ENCODE measurements at regions of chr22 and their contacts with region 1.

Region 1: GRCh38 chr22:40044102-40044869 is 49.5 kb downstream of the FAM83F start:
- DNase-seq: peak; percentile 91 to 100 (median 99)
- ATAC-seq: peak; percentile 86 to 87
- H3K4me3 Mint-ChIP-seq: peak overlapping the region; percentile 93 to 100 (median 96)
- H3K27ac Mint-ChIP-seq: peak overlapping the region; percentile 97 to 100 (median 100)
- H3K4me1 Mint-ChIP-seq: peaks cover 19 to 49% (median 43%) of the 10 kb centered on the region in 4 donors
- H3K27me3 Mint-ChIP-seq: peaks cover 6 to 8% (median 7%) of the 10 kb centered on the region in 5 donors

Region 2: DNA sequence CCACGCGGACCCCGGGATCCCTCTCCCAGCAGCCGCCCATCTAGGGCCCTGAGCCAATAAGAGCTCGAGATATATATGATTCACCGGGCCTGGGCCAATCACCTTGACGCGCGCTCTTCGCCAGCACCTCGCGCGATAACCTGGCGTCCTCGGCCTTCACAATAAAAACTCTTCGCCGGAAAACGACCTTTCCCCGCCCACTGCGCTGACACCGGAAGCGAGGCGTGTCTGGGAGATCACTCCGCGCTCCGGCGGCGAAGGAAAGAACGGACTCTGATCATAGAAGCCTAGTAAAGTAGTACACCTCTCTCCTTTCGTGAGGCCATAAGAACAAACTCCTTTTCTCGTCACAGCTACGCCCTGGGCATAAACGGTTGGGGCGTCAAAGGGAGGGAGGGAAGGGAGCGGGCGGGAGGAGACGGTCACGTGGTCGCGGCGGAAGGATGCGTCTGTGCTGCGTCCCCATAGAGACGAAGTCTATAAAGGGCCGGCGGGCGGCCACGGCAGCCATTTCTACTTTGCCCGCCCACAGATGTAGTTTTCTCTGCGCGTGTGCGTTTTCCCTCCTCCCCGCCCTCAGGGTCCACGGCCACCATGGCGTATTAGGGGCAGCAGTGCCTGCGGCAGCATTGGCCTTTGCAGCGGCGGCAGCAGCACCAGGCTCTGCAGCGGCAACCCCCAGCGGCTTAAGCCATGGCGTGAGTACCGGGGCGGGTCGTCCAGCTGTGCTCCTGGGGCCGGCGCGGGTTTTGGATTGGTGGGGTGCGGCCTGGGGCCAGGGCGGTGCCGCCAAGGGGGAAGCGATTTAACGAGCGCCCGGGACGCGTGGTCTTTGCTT is 524.0 kb before region 1 on chr22 and contains the start of gene ATF4:
- POLR2A ChIA-PET with region 1: interaction called, 19 read pairs
- DNase-seq: peak; percentile 89 to 99 (median 96)
- ATAC-seq: peak; percentile 92 to 95
- H3K4me3 Mint-ChIP-seq: peak within 1 kb of the TSS; percentile 87 to 100 (median 98)
- H3K27ac Mint-ChIP-seq: peak within 1 kb of the TSS; percentile 91 to 100 (median 99)
- H3K4me1 Mint-ChIP-seq: peaks cover 18 to 61% (median 49%) of the 10 kb centered on the region in 4 donors
- H3K27me3 Mint-ChIP-seq: peaks cover 0 to 4% (median 0%) of the 10 kb centered on the region in 5 donors
- polyA plus RNA-seq, gene ATF4: 51.9 to 122 (median 61.0) TPM

Region 3: GRCh38 chr22:39727541-39727940 is 316.7 kb before region 1 on chr22:
- POLR2A ChIA-PET with region 1: no interaction called
- DNase-seq: peak in 2 of 10 donors; percentile 8 to 36
- ATAC-seq: no peak
- H3K4me3 Mint-ChIP-seq: no peak overlapping the region
- H3K27ac Mint-ChIP-seq: no peak overlapping the region
- H3K4me1 Mint-ChIP-seq: peaks cover 0 to 2% (median under 1%) of the 10 kb centered on the region in 4 donors
- H3K27me3 Mint-ChIP-seq: peaks cover 0 to 18% (median 0%) of the 10 kb centered on the region in 5 donors

Region 4: GRCh38 chr22:40055143-40055883 is 11.0 kb after region 1 on chr22:
- POLR2A ChIA-PET with region 1: interaction called, 42 read pairs
- DNase-seq: peak in 2 of 10 donors; percentile 39 to 45
- ATAC-seq: peak; percentile 86 to 91
- H3K4me3 Mint-ChIP-seq: peak overlapping the region; percentile 6 to 83 (median 62)
- H3K27ac Mint-ChIP-seq: peak overlapping the region; percentile 67 to 92 (median 80)
- H3K4me1 Mint-ChIP-seq: peaks cover 52 to 92% (median 83%) of the 10 kb centered on the region in 4 donors
- H3K27me3 Mint-ChIP-seq: no peaks in the 10 kb centered on the region

Region 5: DNA sequence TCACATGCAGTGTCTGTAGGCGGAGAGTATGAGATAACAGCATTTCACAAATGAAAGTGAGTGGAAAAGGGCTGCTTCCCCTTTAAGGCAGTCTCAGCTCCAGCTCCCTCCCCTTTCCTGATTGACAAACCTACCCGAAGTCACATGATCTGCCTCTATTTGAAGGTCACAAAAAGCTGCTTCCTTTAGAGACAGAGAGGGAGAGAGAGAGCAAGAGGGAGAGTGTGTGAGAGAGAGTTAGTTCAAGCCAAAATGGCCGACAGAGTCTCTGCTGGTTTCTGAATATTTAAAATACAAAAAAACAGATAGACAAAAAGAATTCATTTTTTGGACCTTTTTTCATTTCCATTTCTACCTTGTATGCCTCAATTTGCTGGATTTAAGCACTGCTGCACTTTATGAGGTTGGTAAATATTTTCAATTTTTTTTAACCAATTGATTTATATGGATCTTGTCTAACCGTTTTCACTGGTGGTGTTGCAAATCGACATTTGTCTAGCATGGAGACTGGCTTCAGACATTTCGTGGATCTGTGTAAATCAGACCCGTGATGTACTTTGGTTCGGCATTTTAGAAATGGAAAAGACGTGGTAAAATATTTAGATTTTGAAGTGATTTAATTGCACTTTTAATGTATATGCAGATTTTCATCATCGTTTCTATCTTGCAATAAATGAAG is 133.6 kb after region 1 on chr22 and contains the start of gene TNRC6B:
- POLR2A ChIA-PET with region 1: interaction called, 21 read pairs
- DNase-seq: peak; percentile 12 to 92 (median 81)
- ATAC-seq: peak; percentile 83 to 94
- H3K4me3 Mint-ChIP-seq: peak within 1 kb of the TSS; percentile 79 to 98 (median 92)
- H3K27ac Mint-ChIP-seq: peak within 1 kb of the TSS; percentile 90 to 97 (median 94)
- H3K4me1 Mint-ChIP-seq: peaks cover 31 to 72% (median 61%) of the 10 kb centered on the region in 4 donors
- H3K27me3 Mint-ChIP-seq: no peaks in the 10 kb centered on the region
- polyA plus RNA-seq, gene TNRC6B: 67.3 to 116 (median 115) TPM

Region 6: DNA sequence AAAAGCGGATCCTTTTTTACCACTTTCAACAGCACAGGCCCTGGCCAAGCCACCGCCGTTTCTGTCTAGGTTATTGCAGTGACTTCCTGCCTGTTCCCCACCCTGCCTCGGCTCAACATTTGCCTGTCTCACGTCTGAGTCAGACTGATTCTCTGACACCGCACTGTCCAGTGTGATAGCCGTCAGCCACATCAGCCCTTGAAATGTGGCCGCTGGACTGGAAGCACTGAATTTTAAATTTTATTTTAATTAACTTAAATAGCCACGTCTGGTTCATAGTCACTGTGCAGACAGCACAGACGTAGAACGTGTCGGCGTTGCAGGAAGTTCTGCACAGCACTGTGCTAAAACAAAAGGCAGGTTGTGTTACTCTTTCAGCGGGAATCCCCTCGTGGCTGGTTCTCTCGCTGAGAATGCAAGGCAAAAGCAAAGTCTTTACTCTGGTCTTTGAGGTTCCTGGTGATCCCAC is 245.7 kb after region 1 on chr22:
- POLR2A ChIA-PET with region 1: interaction called, 12 read pairs
- DNase-seq: peak; percentile 50 to 83 (median 68)
- ATAC-seq: peak; percentile 88 to 92
- H3K4me3 Mint-ChIP-seq: peak overlapping the region; percentile 36 to 81 (median 74)
- H3K27ac Mint-ChIP-seq: peak overlapping the region; percentile 92 to 99 (median 97)
- H3K4me1 Mint-ChIP-seq: peaks cover 27 to 64% (median 54%) of the 10 kb centered on the region in 4 donors
- H3K27me3 Mint-ChIP-seq: no peaks in the 10 kb centered on the region

Region 7: DNA sequence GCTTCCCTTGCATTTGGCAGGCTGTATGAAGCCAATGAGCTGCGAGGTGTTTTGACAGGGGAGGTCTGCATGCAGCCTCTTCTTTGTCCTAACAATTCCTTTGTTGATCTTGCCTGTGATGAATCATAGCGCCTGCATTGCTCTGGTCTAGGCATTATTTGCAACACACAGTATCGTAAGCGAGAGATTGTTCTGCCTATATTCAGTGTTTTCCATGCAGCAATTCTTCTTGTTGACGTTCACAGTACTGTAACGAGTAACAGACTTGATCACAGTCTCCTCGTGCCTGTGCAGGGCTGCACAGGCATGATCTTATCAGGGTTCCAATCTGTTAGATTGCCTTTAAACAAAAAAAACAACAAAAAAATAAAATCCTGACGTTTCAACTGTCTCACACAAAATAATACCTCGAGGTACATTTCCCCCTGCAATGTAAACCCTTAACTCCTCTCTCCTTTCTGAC is 288.1 kb after region 1 on chr22:
- POLR2A ChIA-PET with region 1: interaction called, 35 read pairs
- DNase-seq: peak in 2 of 10 donors; percentile 67 to 72
- ATAC-seq: peak; percentile 50 to 64
- H3K4me3 Mint-ChIP-seq: peak overlapping the region; percentile 44 to 92 (median 78)
- H3K27ac Mint-ChIP-seq: peak overlapping the region; percentile 80 to 99 (median 95)
- H3K4me1 Mint-ChIP-seq: peaks cover 48 to 94% (median 91%) of the 10 kb centered on the region in 4 donors
- H3K27me3 Mint-ChIP-seq: no peaks in the 10 kb centered on the region